PC-9 (cell line): ENCODE measurements at regions of chr3 and their contacts with region 1.

Region 1: GRCh38 chr3:183252973-183253901 is at the start of gene B3GNT5:
- DNase-seq: peak; percentile 82 to 85
- H3K4me3 ChIP-seq: peak within 1 kb of the TSS; percentile 96
- H3K27ac ChIP-seq: peak within 1 kb of the TSS; percentile 93
- H3K4me1 ChIP-seq: peaks cover 31% of the 10 kb centered on the region
- H3K27me3 ChIP-seq: no peaks in the 10 kb centered on the region
- CTCF ChIP-seq: no peak
- total RNA-seq, gene B3GNT5: 30.7 and 33.6 TPM in 2 replicates

Region 2: DNA sequence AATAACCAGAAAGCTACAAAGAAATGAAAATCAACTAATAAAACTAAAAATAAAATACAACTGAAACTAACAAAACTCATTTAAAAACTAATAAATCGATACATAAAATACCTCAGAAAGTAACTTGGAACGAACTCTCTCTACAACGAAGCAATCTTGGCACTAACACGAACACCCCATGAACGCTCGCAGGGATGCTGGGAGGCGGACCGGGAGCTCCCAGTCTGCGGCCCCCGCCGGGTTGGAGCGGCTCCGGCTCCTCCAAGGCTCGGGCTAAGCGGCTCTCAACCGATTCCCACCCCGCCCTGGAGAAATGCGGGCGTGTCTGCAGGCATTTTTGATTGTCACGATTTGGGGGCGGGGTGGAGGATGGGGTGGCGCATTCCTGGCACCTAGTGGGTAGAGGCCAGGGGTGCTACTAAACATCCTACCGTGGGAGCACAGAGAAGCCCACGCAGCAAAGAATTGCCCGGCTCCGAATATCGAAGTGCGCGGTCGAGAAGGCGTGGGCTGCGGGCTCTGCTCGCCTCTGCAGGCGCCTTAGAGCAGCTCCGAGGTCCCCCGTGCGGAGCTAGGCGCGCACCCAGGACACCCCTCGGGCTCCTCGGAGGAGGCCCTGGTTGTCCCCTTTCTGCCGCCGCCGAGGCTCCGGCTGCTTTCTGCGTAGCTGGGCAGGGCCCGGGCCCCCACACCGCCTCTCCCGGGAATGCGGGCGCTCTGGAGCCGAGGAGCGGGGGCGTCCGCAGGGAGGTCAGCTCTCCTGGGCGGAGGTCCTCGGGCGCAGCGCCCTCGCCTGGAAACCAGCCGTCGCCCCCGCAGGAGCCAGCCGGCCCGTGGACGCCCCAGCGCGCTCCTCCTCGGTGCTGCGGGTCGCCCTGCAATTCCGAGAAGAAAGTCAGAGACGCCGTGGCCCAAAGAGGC is 74.3 kb before region 1 on chr3:
- CTCF ChIA-PET with region 1: no interaction called
- POLR2A ChIA-PET with region 1: no interaction called
- intact Hi-C with region 1: loop called (anchors 1 kb)
- DNase-seq: peak; percentile 52 to 73
- H3K4me3 ChIP-seq: peak overlapping the region; percentile 71
- H3K27ac ChIP-seq: no peak overlapping the region
- H3K4me1 ChIP-seq: no peaks in the 10 kb centered on the region; the same call in 1 of the 2 replicates
- H3K27me3 ChIP-seq: no peaks in the 10 kb centered on the region
- CTCF ChIP-seq: peak; percentile 52; the same call in 1 of the 2 replicates

Region 3: DNA sequence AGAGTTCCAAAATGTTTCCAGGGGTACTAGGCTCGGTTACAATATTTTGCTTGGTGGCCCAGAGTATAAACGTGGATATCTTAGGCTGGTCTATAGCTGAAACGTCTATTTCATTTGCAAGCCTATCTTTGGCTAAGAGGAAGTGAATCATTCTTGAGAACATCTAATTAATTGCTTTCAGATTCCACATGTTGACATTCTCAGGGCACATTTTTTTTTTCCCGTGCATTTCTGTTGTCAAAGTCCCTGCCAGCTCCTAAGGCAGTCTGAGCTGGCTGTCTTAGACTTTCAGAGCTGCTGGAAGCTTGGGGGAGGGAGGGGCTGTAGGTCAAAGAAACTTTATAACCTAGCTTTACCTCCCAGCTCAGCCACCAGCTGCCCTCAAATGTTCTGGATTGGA is 67.5 kb before region 1 on chr3:
- CTCF ChIA-PET with region 1: interaction called, 10 read pairs
- POLR2A ChIA-PET with region 1: no interaction called
- intact Hi-C with region 1: loop called (anchors 1 kb)
- DNase-seq: peak in 1 of 2 experiments; percentile 85
- H3K4me3 ChIP-seq: no peak overlapping the region
- H3K27ac ChIP-seq: peak overlapping the region; percentile 27
- H3K4me1 ChIP-seq: peaks cover 16% of the 10 kb centered on the region
- H3K27me3 ChIP-seq: no peaks in the 10 kb centered on the region
- CTCF ChIP-seq: no peak

Region 4: GRCh38 chr3:183265834-183266417 is 12.7 kb after region 1 on chr3:
- CTCF ChIA-PET with region 1: interaction called, 5 read pairs
- POLR2A ChIA-PET with region 1: interaction called, 12 read pairs
- intact Hi-C with region 1: loop called (anchors 1 kb)
- DNase-seq: peak; percentile 73 to 99
- H3K4me3 ChIP-seq: no peak overlapping the region; the same call in 1 of the 2 replicates
- H3K27ac ChIP-seq: peak overlapping the region; percentile 85
- H3K4me1 ChIP-seq: peaks cover 65% of the 10 kb centered on the region
- H3K27me3 ChIP-seq: no peaks in the 10 kb centered on the region
- CTCF ChIP-seq: no peak

Region 5: DNA sequence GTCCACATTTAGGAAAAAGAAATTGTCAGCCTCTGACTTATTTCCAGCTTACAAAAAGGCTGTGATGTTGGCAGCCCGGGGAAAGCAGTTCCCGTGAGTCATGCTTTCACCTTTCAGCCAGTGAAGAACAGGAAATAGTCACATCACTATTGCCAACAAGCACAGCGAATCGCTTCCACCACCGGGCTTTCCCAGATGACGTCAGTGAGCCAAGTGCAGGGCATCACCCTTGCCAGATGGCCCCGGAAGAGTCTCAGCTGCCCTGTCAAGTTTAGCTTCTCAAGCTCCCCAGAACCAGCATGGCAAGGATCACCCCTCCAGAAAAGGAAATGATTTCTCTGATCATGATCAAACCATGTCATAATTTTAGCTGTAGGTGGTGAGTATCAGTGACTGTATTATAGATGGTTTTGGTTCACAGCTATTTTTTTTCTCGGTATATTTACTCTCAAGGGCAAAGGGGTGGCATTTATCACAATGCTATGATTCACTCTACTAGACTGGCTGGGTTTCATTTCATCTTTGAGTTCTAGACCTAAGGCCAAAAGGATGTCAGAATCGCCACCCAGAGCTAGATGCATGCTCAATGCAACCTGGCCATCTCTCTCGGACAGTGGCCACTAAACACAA is 32.7 kb after region 1 on chr3:
- CTCF ChIA-PET with region 1: interaction called, 4 read pairs
- POLR2A ChIA-PET with region 1: interaction called, 8 read pairs
- intact Hi-C with region 1: loop called (anchors 5 kb)
- DNase-seq: peak; percentile 96 to 100
- H3K4me3 ChIP-seq: peak overlapping the region; percentile 58; the same call in 1 of the 2 replicates
- H3K27ac ChIP-seq: peak overlapping the region; percentile 97
- H3K4me1 ChIP-seq: peaks cover 66% of the 10 kb centered on the region
- H3K27me3 ChIP-seq: no peaks in the 10 kb centered on the region
- CTCF ChIP-seq: no peak